ENCODE measurements at regions of chr9 and their contacts with region 1.

Region 1: DNA sequence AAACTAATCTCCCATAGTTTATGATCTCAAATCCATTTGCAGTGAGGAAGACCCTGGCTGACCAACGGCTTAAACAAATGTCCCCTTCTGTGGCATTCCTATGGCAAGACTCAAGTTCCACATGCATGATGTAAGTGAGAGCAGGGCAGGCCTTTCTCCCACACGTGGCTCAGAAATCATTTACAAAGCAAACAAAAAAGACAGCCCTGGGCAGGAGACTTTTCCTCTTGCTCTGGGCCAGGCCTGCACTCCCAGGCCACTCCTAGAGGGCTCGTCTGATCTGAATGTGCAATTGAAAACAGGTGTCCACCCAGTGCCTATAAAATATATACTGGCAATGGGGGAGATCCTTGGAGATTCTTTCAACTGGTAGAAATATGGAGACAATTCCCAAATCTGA is 123.0 kb downstream of the DMRT2 start:
- DNase-seq: no peak
- ATAC-seq: peak in 2 of 4 donors; percentile 12 to 26
- H3K4me3 ChIP-seq: no peak overlapping the region
- H3K27ac ChIP-seq: no peak overlapping the region
- H3K4me1 ChIP-seq: no peaks in the 10 kb centered on the region
- H3K27me3 ChIP-seq: no peaks in the 10 kb centered on the region
- CTCF ChIP-seq: no peak
- POLR2A ChIP-seq: no peak

Region 2: DNA sequence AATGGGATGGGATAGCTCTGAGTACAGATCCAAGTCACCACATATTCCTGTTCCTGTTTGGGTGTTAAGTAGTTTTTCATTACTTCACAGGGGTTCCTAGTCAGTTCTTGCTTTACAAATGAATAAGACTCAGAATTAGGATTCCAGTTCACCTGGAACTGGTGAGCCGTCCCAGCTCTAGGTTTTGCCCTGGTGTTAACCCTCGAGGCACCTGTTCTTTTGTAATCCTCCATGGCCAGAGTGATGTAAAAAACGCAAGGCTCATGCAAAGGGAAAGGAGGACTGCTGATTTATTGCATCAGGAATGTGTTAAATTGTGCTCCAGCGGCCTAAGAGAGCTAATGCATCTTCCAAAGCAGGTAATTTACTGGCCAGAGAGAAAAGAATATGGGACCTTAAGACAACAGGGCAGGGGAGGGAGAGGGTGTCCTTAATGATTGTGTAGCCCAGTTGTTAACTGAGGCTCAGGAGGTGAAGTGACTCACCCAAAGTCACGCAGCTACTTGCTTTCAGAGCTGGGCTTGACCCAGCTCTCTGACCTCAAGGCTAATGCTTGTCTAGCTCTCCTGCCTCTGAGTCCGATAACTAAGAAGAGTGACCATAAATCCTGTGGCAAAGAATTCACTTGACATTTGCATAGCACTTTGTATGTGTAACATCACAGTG is 52.6 kb before region 1 on chr9:
- intact Hi-C with region 1: no loop called
- DNase-seq: no peak
- ATAC-seq: no peak
- H3K4me3 ChIP-seq: no peak overlapping the region
- H3K27ac ChIP-seq: no peak overlapping the region
- H3K4me1 ChIP-seq: no peaks in the 10 kb centered on the region
- H3K27me3 ChIP-seq: peaks cover 0 to 6% (median 0%) of the 10 kb centered on the region in 9 donors
- CTCF ChIP-seq: no peak
- POLR2A ChIP-seq: no peak

Region 3: DNA sequence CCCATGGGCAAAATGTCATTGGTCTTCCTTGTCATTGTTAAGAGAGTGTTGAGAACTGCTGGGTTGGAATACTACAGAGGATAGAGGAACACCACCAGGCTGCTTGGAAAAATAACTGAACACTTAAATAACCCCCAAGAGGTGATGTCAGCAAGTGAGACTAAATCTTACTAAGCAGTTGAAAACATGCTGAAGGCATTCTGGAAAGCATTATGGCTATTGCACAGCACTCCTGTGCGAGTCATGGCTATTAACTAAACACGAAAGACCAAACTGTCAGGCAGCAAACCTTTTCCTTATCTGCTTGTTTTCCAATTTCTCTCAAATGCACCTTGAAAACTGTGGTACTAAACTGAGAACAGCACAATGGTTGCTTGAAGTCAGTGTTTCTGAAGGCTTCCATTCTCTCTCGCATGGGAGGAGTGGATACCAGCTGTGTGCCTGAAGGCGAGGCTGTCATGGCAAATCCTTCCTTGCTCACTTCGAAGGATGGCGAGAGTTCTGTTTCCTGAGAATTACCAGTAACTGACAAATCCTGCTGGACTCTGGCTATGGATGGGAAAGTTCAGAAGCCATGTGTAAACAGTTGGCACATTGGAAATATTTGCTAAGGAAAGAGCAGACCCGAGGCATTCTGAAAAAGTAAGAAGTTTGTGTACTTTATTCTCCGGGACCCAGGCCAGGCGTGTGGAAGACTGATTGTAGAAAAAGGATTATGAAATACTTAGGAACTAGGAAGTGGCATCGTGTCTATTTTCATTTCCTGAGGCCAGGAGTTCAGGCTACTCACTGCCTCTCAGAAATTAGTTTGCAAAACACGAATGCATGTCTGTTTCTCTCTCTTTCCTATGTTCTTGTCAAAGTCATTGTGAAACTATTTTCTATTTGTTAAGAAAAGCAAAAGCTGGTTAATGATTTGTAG is 59.1 kb after region 1 on chr9:
- intact Hi-C with region 1: loop called in 1 of 10 experiments (anchors 10 kb)
- DNase-seq: peak in 4 of 5 donors; percentile 25 to 68 (median 32)
- ATAC-seq: peak; percentile 47 to 92 (median 65)
- H3K4me3 ChIP-seq: peak overlapping the region in 3 of 12 donors; percentile 7 to 29 (median 7)
- H3K27ac ChIP-seq: peak overlapping the region in 7 of 12 donors; percentile 3 to 55 (median 44)
- H3K4me1 ChIP-seq: peaks cover 0 to 12% (median 0%) of the 10 kb centered on the region in 12 donors
- H3K27me3 ChIP-seq: no peaks in the 10 kb centered on the region
- CTCF ChIP-seq: no peak
- POLR2A ChIP-seq: no peak

Measured in heart left ventricle (tissue), 16 donors.